Breast epithelium (tissue), 4 donors: ENCODE measurements at regions of chr5 and their contacts with region 1.

Region 1: DNA sequence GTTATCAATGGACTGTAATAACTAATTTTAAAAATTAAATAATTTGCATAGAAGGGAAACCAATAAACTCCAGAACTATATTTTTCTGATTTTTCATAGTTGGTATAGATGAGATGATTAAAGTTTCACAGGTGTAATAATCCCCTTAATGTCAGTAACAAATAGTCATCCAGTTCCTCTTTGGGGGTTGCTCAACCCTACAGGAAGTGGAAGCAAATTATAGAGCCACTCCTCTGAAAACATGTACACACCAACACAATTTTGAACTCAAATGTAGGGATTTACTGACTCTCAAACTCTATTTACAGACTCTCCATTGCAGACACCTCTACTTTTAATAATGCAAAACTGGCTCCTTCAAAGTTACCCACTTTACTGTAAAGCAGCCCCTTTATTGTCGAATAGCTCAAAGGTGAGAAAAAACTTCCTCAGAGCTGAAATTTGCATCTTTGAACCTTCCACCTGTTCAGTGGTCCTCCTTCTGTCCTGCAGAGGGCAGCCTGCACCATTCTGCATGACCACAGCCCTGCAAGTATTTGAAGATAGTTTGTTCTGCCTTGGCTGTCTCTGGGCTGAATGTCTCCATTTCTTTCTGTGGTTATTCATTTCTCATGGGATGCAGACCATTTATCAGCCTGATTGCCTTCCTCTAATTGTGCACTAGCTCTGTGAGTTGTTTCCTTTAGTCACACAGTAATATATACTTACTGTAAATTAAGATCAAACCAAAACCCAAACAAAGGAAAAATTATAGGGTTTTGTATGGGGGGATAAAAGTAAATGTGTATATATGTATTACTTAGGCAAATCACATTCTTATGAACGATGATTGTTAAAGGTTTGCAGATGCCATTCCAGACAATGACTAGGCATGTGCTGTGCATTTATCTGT is 383.2 kb upstream of the SGCD start:
- DNase-seq: no peak
- H3K4me3 ChIP-seq: no peak overlapping the region
- H3K27ac ChIP-seq: no peak overlapping the region
- H3K4me1 ChIP-seq: no peaks in the 10 kb centered on the region
- H3K27me3 ChIP-seq: no peaks in the 10 kb centered on the region
- CTCF ChIP-seq: peak in 2 of 3 donors; percentile 41 to 58
- POLR2A ChIP-seq: no peak

Region 2: GRCh38 chr5:155434681-155435080 is 509.1 kb before region 1 on chr5:
- intact Hi-C with region 1: loop called (anchors 5 kb)
- DNase-seq: no peak
- H3K4me3 ChIP-seq: no peak overlapping the region
- H3K27ac ChIP-seq: no peak overlapping the region
- H3K4me1 ChIP-seq: no peaks in the 10 kb centered on the region
- H3K27me3 ChIP-seq: no peaks in the 10 kb centered on the region
- CTCF ChIP-seq: no peak
- POLR2A ChIP-seq: no peak

Region 3: GRCh38 chr5:155978850-155979249 is 35.1 kb after region 1 on chr5:
- intact Hi-C with region 1: loop called (anchors 2 kb)
- DNase-seq: no peak
- H3K4me3 ChIP-seq: no peak overlapping the region
- H3K27ac ChIP-seq: no peak overlapping the region
- H3K4me1 ChIP-seq: no peaks in the 10 kb centered on the region
- H3K27me3 ChIP-seq: no peaks in the 10 kb centered on the region
- CTCF ChIP-seq: no peak
- POLR2A ChIP-seq: no peak